GM10248 (cell line): ENCODE measurements at regions of chrX and their contacts with region 1.

Region 1: GRCh38 chrX:107776649-107777535 is 641 bp upstream of the NCBP2L start:
- DNase-seq: peak; percentile 76
- CTCF ChIP-seq: peak; percentile 40

Region 2: DNA sequence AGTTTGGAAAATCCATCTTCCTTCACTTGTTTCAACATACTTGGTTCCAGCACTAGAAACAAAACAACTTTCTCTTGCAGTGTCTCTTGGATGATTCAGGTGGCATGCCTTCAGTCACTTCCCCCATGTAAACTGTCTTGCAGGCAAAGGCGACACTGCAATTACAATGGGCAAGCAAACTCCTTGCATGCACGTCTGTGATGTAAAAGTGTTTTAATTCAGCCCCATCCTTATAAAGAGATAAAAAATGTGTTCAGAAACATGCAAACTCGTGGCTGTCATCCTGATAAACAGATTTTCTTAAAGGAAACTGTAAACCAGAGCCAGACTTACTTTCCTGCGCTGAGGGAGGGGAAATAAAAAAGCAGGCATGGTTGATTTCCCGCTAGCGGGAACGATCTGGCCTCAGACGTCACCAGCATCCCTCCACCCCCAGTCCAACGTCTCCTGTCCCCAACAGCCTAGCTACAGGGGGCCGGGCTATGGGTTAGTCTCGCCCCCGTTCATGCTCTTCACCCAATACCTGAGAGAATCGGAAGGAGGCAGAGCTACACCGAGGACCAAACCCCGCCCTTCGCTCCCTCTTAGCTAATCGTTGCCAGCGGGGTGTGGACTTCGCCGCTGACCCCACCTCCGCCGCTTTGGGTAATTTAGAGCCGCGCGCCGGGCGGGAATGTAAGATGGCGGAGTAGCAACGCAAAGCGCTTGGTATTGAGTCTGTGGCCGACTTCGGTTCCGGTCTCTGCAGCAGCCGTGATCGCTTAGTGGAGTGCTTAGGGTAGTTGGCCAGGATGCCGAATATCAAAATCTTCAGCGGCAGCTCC is 148.8 kb before region 1 on chrX and contains the start of gene PRPS1:
- CTCF ChIA-PET with region 1: interaction called, 19 read pairs
- POLR2A ChIA-PET with region 1: no interaction called
- DNase-seq: peak; percentile 89
- CTCF ChIP-seq: no peak

Region 3: DNA sequence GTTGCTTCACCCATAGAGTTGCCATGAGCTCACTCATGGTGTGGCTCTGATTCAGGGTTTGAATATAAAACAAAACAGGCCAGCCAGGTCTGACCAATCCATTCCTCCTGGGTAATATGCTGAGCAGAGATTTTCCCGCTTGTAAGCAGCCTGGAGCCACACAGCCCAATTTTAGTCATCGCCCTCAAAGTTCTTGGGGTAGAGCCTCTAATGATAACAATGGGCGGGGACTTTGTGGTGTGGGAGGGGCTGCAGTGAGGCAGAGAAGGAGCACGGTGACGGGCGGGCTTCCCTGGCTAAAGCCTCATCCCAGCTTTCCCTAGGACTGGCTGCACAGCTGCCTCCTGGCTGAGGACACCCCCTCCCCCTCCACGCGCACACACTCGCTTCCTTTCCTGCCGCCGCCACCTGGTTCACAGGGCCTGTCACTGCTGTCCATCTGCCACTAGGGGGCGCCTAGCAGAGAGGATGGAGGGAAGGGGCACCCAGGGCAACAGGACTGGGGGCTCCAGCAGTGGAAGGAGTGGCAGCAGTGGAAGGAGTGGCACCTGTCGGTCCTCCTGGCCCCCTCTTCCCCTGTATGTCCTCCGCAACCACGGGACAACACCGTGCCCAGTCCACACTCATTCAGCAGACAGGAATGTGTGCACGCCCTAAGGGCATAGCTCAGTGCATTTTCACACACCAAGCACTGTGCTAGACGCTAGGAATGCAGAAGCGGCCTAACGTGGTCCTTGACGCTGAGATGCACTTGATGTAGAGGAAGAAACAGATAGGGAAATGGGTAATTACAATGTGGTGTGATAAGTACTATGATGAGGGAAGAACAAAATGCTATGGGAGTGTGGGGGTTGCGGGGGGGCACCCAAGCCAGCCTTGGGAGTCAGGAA is 121.8 kb before region 1 on chrX:
- CTCF ChIA-PET with region 1: interaction called, 222 read pairs
- POLR2A ChIA-PET with region 1: no interaction called
- DNase-seq: peak; percentile 25
- CTCF ChIP-seq: peak; percentile 77

Region 4: GRCh38 chrX:107766470-107767150 is 10.3 kb before region 1 on chrX:
- CTCF ChIA-PET with region 1: interaction called, 15 read pairs
- POLR2A ChIA-PET with region 1: no interaction called
- DNase-seq: no peak
- CTCF ChIP-seq: no peak